Right ventricle myocardium inferior (tissue), 1 donor: ENCODE measurements at regions of chr1 and their contacts with region 1.

Region 1: DNA sequence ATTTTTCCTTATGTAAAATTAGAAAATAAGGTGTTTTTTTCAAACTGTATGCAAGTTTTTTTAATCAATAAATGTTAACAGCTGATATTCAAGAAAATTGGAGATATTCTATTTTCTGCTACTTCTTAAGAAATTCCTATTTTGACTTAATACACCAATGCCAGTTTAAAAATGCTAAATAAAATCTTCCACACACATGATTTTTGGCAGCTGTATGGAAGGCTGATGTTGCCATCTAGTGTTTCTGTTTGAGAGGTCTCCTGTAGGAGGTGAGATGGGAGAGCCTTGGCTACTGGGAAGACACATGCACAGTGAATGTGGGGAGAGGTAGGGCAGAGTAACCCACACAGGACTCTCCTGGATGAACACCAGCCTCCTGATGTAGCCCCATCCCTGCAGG is 29.2 kb upstream of the OR2B11 start:
- DNase-seq: no peak
- ATAC-seq: no peak

Region 2: DNA sequence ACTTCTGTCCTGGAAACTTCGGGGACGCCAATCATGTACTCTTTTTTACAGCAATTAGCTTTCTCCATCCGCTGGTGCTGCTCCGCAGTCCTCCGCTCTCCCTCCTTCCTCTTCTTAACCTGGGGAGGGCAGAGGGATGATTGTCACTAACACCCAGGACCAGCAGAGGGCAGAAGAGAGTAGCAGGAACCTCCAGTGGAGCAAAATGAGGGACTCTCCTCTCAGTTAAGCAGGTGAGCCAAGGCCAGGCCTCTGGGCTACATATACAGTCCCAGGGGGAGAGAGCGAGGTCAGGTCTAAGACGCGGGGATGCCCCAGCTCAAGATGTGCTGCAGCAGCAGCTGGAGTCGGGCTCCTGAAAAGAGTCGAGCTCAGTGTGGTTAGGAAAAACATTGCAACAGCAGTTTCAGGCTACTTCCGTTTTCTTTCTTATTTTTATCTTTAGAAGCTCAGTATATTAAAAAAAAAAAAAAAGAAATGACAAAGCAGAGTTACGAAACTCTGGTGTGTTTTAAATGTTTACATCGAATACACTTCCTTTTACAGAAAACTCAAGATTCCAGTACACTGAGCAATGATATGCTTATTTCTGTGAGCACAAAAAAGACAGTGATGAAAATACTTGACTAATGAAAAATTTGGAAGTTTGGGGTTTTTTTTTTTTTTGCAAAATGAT is 96.8 kb before region 1 on chr1:
- intact Hi-C with region 1: loop called (anchors 2 kb)
- DNase-seq: peak; percentile 87
- ATAC-seq: peak; percentile 93